Activated CD4-positive, alpha-beta T cell treated with anti-CD3 and anti-CD28 coated beads for 36 hours (primary cell): ENCODE measurements at regions of chrX and their contacts with region 1.

Region 1: GRCh38 chrX:107672955-107673378 is 44.7 kb downstream of the PRPS1 start:
- DNase-seq: peak; percentile 87
- ATAC-seq: peak; percentile 52
- H3K4me3 Mint-ChIP-seq: peak overlapping the region; percentile 53
- H3K27ac Mint-ChIP-seq: peak overlapping the region; percentile 85
- H3K4me1 Mint-ChIP-seq: peaks cover 43% of the 10 kb centered on the region
- H3K27me3 Mint-ChIP-seq: no peaks in the 10 kb centered on the region

Region 2: DNA sequence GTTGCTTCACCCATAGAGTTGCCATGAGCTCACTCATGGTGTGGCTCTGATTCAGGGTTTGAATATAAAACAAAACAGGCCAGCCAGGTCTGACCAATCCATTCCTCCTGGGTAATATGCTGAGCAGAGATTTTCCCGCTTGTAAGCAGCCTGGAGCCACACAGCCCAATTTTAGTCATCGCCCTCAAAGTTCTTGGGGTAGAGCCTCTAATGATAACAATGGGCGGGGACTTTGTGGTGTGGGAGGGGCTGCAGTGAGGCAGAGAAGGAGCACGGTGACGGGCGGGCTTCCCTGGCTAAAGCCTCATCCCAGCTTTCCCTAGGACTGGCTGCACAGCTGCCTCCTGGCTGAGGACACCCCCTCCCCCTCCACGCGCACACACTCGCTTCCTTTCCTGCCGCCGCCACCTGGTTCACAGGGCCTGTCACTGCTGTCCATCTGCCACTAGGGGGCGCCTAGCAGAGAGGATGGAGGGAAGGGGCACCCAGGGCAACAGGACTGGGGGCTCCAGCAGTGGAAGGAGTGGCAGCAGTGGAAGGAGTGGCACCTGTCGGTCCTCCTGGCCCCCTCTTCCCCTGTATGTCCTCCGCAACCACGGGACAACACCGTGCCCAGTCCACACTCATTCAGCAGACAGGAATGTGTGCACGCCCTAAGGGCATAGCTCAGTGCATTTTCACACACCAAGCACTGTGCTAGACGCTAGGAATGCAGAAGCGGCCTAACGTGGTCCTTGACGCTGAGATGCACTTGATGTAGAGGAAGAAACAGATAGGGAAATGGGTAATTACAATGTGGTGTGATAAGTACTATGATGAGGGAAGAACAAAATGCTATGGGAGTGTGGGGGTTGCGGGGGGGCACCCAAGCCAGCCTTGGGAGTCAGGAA is 17.9 kb before region 1 on chrX:
- CTCF ChIA-PET with region 1: interaction called, 11 read pairs
- POLR2A ChIA-PET with region 1: no interaction called
- intact Hi-C with region 1: no loop called
- DNase-seq: peak; percentile 81
- ATAC-seq: peak; percentile 83
- H3K4me3 Mint-ChIP-seq: no peak overlapping the region
- H3K27ac Mint-ChIP-seq: peak overlapping the region; percentile 2
- H3K4me1 Mint-ChIP-seq: peaks cover 12% of the 10 kb centered on the region
- H3K27me3 Mint-ChIP-seq: no peaks in the 10 kb centered on the region

Region 3: DNA sequence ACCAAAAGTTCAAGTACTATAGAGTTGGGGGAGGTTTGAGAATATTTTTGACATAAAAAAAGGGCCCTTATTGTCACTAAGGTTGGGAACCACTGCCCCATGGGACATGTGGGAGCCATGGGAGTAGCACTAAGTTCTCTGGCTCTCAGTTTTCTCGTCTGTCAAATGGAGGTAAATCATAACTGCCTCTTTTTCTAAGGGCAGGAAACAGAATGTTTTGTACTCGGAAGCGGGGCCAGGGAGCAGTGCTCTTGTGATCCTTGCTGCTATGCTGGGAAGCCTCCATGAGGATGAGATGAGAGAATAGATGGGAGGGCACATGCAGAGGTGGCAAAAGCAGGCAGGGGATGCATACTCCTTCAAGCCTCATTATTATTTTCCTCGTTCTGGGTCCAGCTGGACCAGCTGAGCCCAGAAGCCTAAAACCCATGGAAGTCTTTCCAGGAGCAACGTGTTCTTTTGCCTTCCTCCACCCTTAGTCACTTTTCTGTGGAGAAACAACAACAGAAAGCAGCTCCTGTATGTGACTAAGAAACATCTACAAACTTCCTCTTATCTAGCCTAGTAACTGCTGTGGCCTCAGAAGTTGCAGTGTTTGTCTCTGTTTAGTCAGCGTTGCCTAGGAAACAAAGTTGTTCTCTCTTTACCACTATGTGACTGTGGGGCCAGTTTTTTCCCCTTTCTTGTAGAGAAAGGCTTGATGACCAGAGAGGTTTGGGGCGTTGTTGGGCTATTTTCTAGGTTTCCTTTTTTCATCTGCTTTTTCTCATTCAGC is 37.8 kb after region 1 on chrX:
- CTCF ChIA-PET with region 1: interaction called, 191 read pairs
- POLR2A ChIA-PET with region 1: interaction called, 144 read pairs
- intact Hi-C with region 1: loop called (anchors 1 kb)
- DNase-seq: peak; percentile 60
- ATAC-seq: peak; percentile 81
- H3K4me3 Mint-ChIP-seq: peak overlapping the region; percentile 34
- H3K27ac Mint-ChIP-seq: peak overlapping the region; percentile 99
- H3K4me1 Mint-ChIP-seq: peaks cover 53% of the 10 kb centered on the region
- H3K27me3 Mint-ChIP-seq: no peaks in the 10 kb centered on the region

Region 4: DNA sequence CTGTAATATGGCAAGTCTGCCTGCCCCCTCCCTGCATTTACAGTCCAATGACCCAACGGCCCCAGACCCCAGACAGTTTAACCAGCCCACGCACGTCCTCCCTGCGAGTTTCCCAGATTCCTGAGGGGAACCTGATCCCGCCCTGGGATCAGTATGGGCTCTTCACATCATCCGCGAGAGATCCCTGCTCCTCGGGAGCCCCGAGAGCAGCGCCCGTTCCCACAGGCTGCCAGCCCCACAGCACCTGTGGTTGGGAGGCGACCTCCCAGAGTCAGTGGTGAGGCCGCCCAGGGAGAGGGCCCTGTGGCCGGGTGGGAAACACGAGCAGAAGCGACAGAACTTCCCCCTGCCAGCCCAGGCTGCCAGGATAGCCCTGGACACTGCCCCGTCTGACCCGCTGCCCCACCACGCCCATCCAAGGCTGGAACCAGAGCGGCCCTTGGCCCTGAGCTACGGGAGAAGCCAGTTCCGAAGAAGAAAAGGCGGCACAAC is 69.8 kb after region 1 on chrX:
- CTCF ChIA-PET with region 1: interaction called, 6 read pairs
- POLR2A ChIA-PET with region 1: interaction called, 4 read pairs
- intact Hi-C with region 1: loop called (anchors 1 kb)
- DNase-seq: no peak
- ATAC-seq: no peak
- H3K4me3 Mint-ChIP-seq: peak overlapping the region; percentile 66
- H3K27ac Mint-ChIP-seq: peak overlapping the region; percentile 96
- H3K4me1 Mint-ChIP-seq: peaks cover 42% of the 10 kb centered on the region
- H3K27me3 Mint-ChIP-seq: no peaks in the 10 kb centered on the region

Region 5: DNA sequence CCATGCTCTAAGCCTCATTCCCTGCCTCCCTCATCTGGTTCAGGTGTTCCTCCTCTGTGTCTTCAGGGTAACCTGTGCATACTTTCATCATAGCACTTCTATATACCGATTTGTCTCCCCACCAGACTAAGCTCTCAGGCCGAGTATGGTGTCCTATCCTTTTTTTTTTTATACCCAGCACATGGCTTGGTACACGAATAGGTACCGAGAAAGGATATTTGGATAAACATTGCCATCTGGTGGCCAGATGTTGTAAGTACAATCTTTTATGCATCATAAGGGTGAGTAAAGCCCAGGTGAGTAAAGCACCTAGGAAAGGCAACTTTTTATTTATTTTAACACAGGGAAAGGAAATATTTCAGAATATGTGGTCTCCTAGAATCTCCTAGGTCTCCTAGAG is 221.1 kb after region 1 on chrX:
- CTCF ChIA-PET with region 1: no interaction called
- POLR2A ChIA-PET with region 1: no interaction called
- intact Hi-C with region 1: loop called in 1 of 2 experiments (anchors 1 kb)
- DNase-seq: peak; percentile 16
- ATAC-seq: peak; percentile 82
- H3K4me3 Mint-ChIP-seq: no peak overlapping the region
- H3K27ac Mint-ChIP-seq: no peak overlapping the region
- H3K4me1 Mint-ChIP-seq: no peaks in the 10 kb centered on the region
- H3K27me3 Mint-ChIP-seq: no peaks in the 10 kb centered on the region